Caco-2 (cell line): ENCODE measurements at regions of chr18 and their contacts with region 1.

Region 1: GRCh38 chr18:72672364-72673184 is 128.4 kb upstream of the CBLN2 start:
- DNase-seq: peak in 1 of 2 experiments; percentile 2
- H3K4me3 ChIP-seq: no peak overlapping the region
- H3K4me3 Mint-ChIP-seq: no peak overlapping the region
- H3K27ac Mint-ChIP-seq: no peak overlapping the region
- H3K4me1 ChIP-seq: no peaks in the 10 kb centered on the region
- H3K4me1 Mint-ChIP-seq: no peaks in the 10 kb centered on the region
- H3K27me3 ChIP-seq: no peaks in the 10 kb centered on the region
- H3K27me3 Mint-ChIP-seq: peaks cover 4% of the 10 kb centered on the region
- CTCF ChIP-seq: peak; percentile 23 to 47

Region 2: DNA sequence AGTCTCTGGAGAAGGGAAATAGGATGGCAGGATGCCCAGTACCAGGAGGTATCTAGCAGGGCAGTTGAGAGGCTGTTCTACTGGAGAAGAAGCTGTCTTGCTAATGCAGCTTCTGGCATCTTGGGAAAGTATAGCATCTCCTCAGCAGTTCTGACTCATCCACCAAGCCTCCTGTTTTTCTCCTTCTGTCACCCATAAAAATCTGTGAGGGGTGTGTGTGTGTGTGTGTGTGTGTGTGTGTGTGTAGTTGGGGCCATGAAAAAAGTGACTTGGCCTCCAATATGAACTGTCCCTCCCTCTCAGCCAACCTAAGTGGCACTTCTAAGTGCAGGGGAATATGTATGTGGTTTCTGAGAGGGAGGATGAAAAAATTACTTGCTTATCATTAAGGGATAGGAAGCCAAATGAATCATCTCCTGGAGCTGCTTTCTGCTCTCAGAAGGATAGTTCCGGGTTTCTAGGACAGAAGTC is 212.3 kb before region 1 on chr18:
- CTCF ChIA-PET with region 1: no interaction called
- POLR2A ChIA-PET with region 1: no interaction called
- intact Hi-C with region 1: loop called (anchors 10 kb)
- DNase-seq: no peak
- H3K4me3 ChIP-seq: no peak overlapping the region
- H3K4me3 Mint-ChIP-seq: no peak overlapping the region
- H3K27ac Mint-ChIP-seq: no peak overlapping the region
- H3K4me1 ChIP-seq: no peaks in the 10 kb centered on the region
- H3K4me1 Mint-ChIP-seq: no peaks in the 10 kb centered on the region
- H3K27me3 ChIP-seq: no peaks in the 10 kb centered on the region
- H3K27me3 Mint-ChIP-seq: no peaks in the 10 kb centered on the region
- CTCF ChIP-seq: no peak

Region 3: GRCh38 chr18:72652990-72653593 is 19.5 kb before region 1 on chr18:
- CTCF ChIA-PET with region 1: no interaction called
- POLR2A ChIA-PET with region 1: no interaction called
- intact Hi-C with region 1: loop called (anchors 1 kb)
- DNase-seq: peak; percentile 39 to 47
- H3K4me3 ChIP-seq: no peak overlapping the region
- H3K4me3 Mint-ChIP-seq: no peak overlapping the region
- H3K27ac Mint-ChIP-seq: no peak overlapping the region
- H3K4me1 ChIP-seq: no peaks in the 10 kb centered on the region
- H3K4me1 Mint-ChIP-seq: no peaks in the 10 kb centered on the region
- H3K27me3 ChIP-seq: no peaks in the 10 kb centered on the region
- H3K27me3 Mint-ChIP-seq: peaks cover 5% of the 10 kb centered on the region
- CTCF ChIP-seq: no peak